MCF 10A (cell line): ENCODE measurements at regions of chr5 and their contacts with region 1.

Region 1: GRCh38 chr5:132007399-132008165 is 3.9 kb downstream of the ACSL6 start:
- DNase-seq: peak; percentile 90
- H3K4me3 Mint-ChIP-seq: no peak overlapping the region
- H3K27ac Mint-ChIP-seq: no peak overlapping the region
- H3K4me1 Mint-ChIP-seq: peaks cover 19% of the 10 kb centered on the region
- H3K27me3 Mint-ChIP-seq: no peaks in the 10 kb centered on the region
- CTCF ChIP-seq: peak; percentile 95

Region 2: GRCh38 chr5:131423056-131423455 is 584.5 kb before region 1 on chr5:
- CTCF ChIA-PET with region 1: no interaction called
- POLR2A ChIA-PET with region 1: no interaction called
- intact Hi-C with region 1: loop called (anchors 1 kb)
- DNase-seq: peak; percentile 38
- H3K4me3 Mint-ChIP-seq: no peak overlapping the region
- H3K27ac Mint-ChIP-seq: no peak overlapping the region
- H3K4me1 Mint-ChIP-seq: no peaks in the 10 kb centered on the region
- H3K27me3 Mint-ChIP-seq: no peaks in the 10 kb centered on the region
- CTCF ChIP-seq: peak; percentile 50

Region 3: GRCh38 chr5:131634996-131635754 is 372.4 kb before region 1 on chr5 and contains the start of gene RAPGEF6:
- CTCF ChIA-PET with region 1: interaction called, 12 read pairs
- POLR2A ChIA-PET with region 1: interaction called, 4 read pairs
- intact Hi-C with region 1: loop called (anchors 2 kb)
- DNase-seq: peak; percentile 100
- H3K4me3 Mint-ChIP-seq: no peak within 1 kb of the TSS
- H3K27ac Mint-ChIP-seq: peak within 1 kb of the TSS; percentile 97
- H3K4me1 Mint-ChIP-seq: peaks cover 6% of the 10 kb centered on the region
- H3K27me3 Mint-ChIP-seq: no peaks in the 10 kb centered on the region
- CTCF ChIP-seq: no peak
- total RNA-seq, gene RAPGEF6: 20.5 and 23.4 TPM in 2 replicates

Region 4: GRCh38 chr5:131796793-131797693 is 210.5 kb before region 1 on chr5 and contains the start of gene FNIP1:
- CTCF ChIA-PET with region 1: interaction called, 15 read pairs
- POLR2A ChIA-PET with region 1: interaction called, 8 read pairs
- intact Hi-C with region 1: no loop called
- DNase-seq: peak; percentile 99
- H3K4me3 Mint-ChIP-seq: peak within 1 kb of the TSS; percentile 94
- H3K27ac Mint-ChIP-seq: peak within 1 kb of the TSS; percentile 94
- H3K4me1 Mint-ChIP-seq: peaks cover 14% of the 10 kb centered on the region
- H3K27me3 Mint-ChIP-seq: no peaks in the 10 kb centered on the region
- CTCF ChIP-seq: no peak
- total RNA-seq, gene FNIP1: 36.3 and 56.6 TPM in 2 replicates

Region 5: DNA sequence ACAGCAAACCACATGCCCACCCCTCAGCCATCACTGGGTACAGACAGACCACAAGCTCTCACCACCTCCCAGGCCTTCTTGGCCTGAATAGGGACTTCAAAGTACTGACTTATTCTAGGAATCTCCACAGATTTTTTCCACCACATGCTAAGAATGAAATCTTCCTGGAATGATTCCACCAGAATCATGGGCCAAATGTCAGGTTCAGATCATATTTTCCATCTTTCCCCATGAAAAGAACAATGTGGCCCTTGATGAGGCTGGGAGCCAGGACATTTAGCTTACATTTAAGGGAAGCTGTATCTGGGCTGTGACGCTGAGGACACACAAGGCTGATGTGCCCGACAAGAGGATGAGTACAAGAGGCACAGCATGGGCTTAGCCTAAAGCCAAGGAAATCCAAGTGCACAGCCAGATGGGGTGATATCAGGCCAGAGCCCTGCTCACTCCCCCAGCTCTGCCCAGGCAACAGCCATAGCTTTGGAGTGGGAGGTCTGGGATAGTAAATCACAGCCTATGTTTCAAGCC is 24.3 kb before region 1 on chr5:
- CTCF ChIA-PET with region 1: interaction called, 13 read pairs
- POLR2A ChIA-PET with region 1: no interaction called
- intact Hi-C with region 1: no loop called
- DNase-seq: no peak
- H3K4me3 Mint-ChIP-seq: no peak overlapping the region
- H3K27ac Mint-ChIP-seq: no peak overlapping the region
- H3K4me1 Mint-ChIP-seq: no peaks in the 10 kb centered on the region
- H3K27me3 Mint-ChIP-seq: peaks cover 11% of the 10 kb centered on the region
- CTCF ChIP-seq: no peak

Region 6: DNA sequence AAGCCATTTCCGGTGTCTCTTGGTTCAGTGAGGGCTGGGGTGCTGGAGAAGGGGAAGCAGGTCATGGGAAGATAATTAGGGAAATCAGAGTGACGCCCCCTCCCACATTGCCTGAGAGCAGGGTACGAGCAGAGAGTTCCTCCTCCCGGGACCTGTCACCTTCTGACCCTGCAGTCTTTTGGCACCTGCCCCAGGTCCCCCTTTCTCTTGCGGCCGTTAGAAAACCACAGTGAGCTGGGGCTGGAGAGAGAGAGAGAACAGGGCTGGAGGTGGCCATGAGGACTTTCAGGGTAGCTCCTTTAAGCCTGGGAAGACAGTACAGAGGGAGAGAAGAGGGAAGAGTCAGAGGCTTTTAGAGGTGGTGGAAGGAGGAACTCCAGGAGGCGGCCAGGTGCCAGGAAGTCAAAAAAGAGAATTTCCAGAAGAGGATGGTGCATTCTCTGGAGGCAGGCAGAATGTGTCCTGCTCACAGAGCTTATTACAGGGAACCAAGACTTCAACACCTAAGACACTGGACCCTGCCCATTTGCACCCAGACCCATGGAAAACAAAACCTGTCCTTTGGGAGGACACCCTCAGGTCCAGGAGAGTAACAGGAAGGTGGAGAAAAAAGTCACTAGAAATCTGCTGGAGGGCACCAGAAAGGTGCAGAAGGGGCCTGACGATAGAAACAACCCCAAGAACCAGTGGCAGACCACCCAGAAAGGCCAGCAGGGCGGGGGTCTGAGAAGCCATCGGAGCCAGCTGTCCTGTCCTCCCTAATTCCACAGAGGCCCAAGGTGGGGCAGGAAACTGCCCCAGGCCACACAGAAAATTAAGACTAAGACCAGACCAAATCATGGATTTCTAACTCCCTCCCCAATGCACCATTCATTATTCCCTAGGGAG is 10.4 kb after region 1 on chr5:
- CTCF ChIA-PET with region 1: interaction called, 10 read pairs
- POLR2A ChIA-PET with region 1: no interaction called
- intact Hi-C with region 1: no loop called
- DNase-seq: no peak
- H3K4me3 Mint-ChIP-seq: no peak overlapping the region
- H3K27ac Mint-ChIP-seq: no peak overlapping the region
- H3K4me1 Mint-ChIP-seq: no peaks in the 10 kb centered on the region
- H3K27me3 Mint-ChIP-seq: peaks cover 45% of the 10 kb centered on the region
- CTCF ChIP-seq: no peak

Region 7: GRCh38 chr5:132156413-132156812 is 148.8 kb after region 1 on chr5:
- CTCF ChIA-PET with region 1: no interaction called
- POLR2A ChIA-PET with region 1: no interaction called
- intact Hi-C with region 1: no loop called
- DNase-seq: no peak
- H3K4me3 Mint-ChIP-seq: no peak overlapping the region
- H3K27ac Mint-ChIP-seq: no peak overlapping the region
- H3K4me1 Mint-ChIP-seq: no peaks in the 10 kb centered on the region
- H3K27me3 Mint-ChIP-seq: no peaks in the 10 kb centered on the region
- CTCF ChIP-seq: no peak